CD4-positive, alpha-beta T cell (primary cell): ENCODE measurements at regions of chr1 and their contacts with region 1.

Region 1: DNA sequence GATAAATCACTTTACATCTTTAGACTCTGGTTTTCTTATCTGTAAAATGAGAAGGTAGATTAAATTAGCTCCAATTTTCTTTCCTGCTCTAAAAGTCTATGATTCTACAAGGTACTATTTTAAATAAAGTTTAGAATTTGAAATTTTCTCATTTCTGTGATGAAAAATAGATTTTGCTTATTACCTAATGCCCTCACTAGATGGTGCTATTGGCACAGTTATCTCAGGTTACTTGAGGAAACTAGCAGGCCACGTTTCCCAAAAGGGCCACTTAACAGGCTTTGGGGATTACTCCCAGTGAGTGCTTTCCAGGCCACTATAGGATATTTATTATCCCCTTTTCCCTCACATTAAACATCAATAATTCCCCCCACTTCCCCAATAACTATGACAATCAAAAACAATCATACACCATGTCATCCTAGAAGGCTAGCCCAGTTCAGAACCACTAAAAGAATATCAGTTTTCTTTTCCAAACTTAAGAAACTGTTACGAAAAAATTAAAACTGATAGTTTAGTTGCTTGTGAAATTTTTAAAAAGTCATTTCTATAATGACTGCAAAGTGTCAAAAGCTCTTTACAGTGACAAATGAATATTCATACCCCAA is 30.6 kb downstream of the OMA1 start:
- DNase-seq: peak in 8 of 14 experiments; percentile 1 to 81 (median 25)
- ATAC-seq: peak; percentile 54
- H3K4me3 ChIP-seq: no peak overlapping the region
- H3K4me3 Mint-ChIP-seq: no peak overlapping the region
- H3K27ac ChIP-seq: no peak overlapping the region
- H3K27ac Mint-ChIP-seq: peak overlapping the region; percentile 25
- H3K4me1 ChIP-seq: no peaks in the 10 kb centered on the region
- H3K4me1 Mint-ChIP-seq: peaks cover 9% of the 10 kb centered on the region
- H3K27me3 ChIP-seq: no peaks in the 10 kb centered on the region
- H3K27me3 Mint-ChIP-seq: no peaks in the 10 kb centered on the region
- CTCF ChIP-seq: peak; percentile 83

Region 2: GRCh38 chr1:57741521-57741920 is 774.4 kb before region 1 on chr1:
- CTCF ChIA-PET with region 1: no interaction called
- POLR2A ChIA-PET with region 1: no interaction called
- intact Hi-C with region 1: no loop called
- DNase-seq: no peak
- ATAC-seq: no peak
- H3K4me3 ChIP-seq: no peak overlapping the region
- H3K4me3 Mint-ChIP-seq: no peak overlapping the region
- H3K27ac ChIP-seq: no peak overlapping the region
- H3K27ac Mint-ChIP-seq: no peak overlapping the region
- H3K4me1 ChIP-seq: no peaks in the 10 kb centered on the region
- H3K4me1 Mint-ChIP-seq: no peaks in the 10 kb centered on the region
- H3K27me3 ChIP-seq: no peaks in the 10 kb centered on the region
- H3K27me3 Mint-ChIP-seq: no peaks in the 10 kb centered on the region
- CTCF ChIP-seq: no peak

Region 3: DNA sequence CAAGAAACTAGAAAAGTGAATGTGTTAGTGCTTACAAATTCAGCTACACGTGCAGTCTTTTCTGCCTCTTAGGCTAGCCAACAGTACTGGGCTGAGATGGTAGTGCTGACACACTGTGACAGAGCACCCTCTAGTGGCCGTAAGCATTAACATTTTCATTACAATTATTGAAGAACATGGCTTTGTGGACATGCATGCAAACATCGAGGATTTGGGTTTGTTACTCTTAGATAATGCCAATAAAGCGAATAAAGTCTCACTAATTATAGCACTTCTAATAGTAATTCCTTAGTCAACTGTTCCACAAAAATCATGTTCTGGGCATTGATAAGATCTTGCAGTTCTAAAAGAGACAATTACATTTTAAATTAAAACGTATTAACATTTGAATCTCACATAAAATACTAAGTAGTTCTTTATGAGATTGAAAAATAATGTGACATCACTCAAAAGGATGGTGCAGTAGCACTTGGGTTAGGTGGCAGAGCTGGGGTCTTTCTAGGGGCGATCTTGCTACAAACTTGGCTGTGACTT is 136.8 kb after region 1 on chr1:
- CTCF ChIA-PET with region 1: interaction called, 16 read pairs
- POLR2A ChIA-PET with region 1: no interaction called
- intact Hi-C with region 1: loop called (anchors 1 kb)
- DNase-seq: peak; percentile 16 to 86 (median 42)
- ATAC-seq: peak; percentile 92
- H3K4me3 ChIP-seq: no peak overlapping the region
- H3K4me3 Mint-ChIP-seq: no peak overlapping the region
- H3K27ac ChIP-seq: no peak overlapping the region
- H3K27ac Mint-ChIP-seq: no peak overlapping the region
- H3K4me1 ChIP-seq: peaks cover 11% of the 10 kb centered on the region
- H3K4me1 Mint-ChIP-seq: peaks cover 23% of the 10 kb centered on the region
- H3K27me3 ChIP-seq: no peaks in the 10 kb centered on the region
- H3K27me3 Mint-ChIP-seq: no peaks in the 10 kb centered on the region
- CTCF ChIP-seq: peak; percentile 96